AG04450 (cell line): ENCODE measurements at regions of chr4 and their contacts with region 1.

Region 1: DNA sequence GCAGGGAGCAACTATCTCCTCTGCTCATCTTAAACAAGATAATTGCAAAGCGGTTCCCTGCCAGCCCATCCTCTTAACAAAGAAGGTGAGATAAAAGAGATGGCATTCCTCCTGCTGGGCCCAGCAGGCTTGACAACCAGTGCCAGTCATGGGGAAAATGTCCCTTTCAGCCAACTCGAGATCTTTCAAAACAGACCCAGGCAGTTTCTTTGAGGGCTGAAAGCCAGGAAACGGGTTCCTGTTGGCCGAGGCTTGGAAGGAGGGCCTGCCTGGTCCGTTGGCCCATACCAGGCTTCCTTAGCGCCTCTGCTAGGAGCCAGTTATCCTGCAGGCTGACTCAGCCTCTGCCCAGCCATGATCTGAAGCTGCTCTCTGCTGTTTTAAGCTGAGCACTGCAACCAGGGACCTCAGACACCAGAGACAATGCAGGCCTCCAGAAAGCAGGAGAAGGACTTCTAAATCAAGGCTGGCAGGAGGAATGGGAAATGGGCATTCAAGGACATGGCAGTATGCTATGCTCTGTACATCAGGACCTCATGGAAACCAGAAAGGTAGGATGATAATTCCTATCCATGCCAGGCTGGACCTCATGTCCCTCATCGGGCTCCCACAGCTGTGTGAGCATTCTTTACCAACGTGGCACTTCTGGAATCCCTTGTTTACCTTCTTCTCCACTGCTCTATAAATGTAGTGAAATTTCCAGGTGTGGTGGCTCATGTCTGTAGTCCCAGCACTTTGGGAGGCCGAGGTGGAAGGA is 42.4 kb upstream of the SLC2A9 start:
- DNase-seq: peak; percentile 42
- H3K4me3 ChIP-seq: no peak overlapping the region
- H3K27ac ChIP-seq: no peak overlapping the region
- H3K27me3 ChIP-seq: no peaks in the 10 kb centered on the region
- CTCF ChIP-seq: peak; percentile 69

Region 2: GRCh38 chr4:9832640-9833308 is 230.9 kb before region 1 on chr4:
- CTCF ChIA-PET with region 1: interaction called, 10 read pairs
- POLR2A ChIA-PET with region 1: no interaction called
- DNase-seq: no peak
- H3K4me3 ChIP-seq: no peak overlapping the region
- H3K27ac ChIP-seq: no peak overlapping the region
- H3K27me3 ChIP-seq: no peaks in the 10 kb centered on the region
- CTCF ChIP-seq: no peak

Region 3: DNA sequence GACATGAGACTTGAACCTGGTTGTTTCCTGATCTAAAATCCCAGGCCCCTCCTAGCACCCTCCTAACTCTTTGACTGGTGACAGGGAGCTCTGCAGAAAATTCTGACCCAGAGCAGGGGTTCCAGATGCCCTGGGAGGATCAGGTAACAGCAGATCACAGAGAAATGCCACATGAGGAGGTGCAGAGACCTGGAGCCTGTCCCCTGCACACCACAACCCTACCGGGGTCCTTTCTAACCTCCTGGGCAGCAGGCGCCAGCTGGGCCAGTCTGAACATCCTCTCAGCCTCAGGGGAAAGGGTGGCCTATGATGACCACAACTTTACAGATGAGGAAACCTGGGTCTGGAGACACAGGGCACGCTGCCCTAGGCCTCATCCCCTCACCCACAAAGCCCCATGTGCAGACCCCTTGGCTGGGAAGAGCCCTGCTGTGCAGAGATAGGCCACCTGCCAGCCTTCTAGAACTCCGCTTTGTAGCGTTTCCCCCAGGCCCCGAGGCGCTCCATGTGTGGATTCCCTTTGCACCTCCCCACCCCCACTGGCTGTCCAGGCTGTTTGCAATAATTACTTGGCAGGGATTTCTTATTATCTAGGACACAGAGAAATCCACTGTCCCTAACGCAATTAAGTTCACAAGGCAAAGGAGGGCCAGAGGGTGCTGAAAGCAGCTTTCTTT is 16.3 kb after region 1 on chr4:
- CTCF ChIA-PET with region 1: no interaction called
- POLR2A ChIA-PET with region 1: no interaction called
- DNase-seq: no peak
- H3K4me3 ChIP-seq: no peak overlapping the region
- H3K27ac ChIP-seq: peak overlapping the region; percentile 21
- H3K27me3 ChIP-seq: no peaks in the 10 kb centered on the region
- CTCF ChIP-seq: no peak